Stomach (tissue), 19 donors: ENCODE measurements at regions of chr17 and their contacts with region 1.

Region 1: GRCh38 chr17:13002766-13003451 is 14.9 kb downstream of the ELAC2 start:
- DNase-seq: peak; percentile 84 to 90
- H3K4me3 ChIP-seq: no peak overlapping the region
- H3K27ac ChIP-seq: no peak overlapping the region
- H3K4me1 ChIP-seq: peaks cover 0 to 17% (median 4%) of the 10 kb centered on the region in 4 donors
- H3K27me3 ChIP-seq: no peaks in the 10 kb centered on the region
- CTCF ChIP-seq: peak in 5 of 7 experiments; percentile 61 to 87 (median 75)
- EP300 ChIP-seq: no peak
- POLR2A ChIP-seq: no peak

Region 2: DNA sequence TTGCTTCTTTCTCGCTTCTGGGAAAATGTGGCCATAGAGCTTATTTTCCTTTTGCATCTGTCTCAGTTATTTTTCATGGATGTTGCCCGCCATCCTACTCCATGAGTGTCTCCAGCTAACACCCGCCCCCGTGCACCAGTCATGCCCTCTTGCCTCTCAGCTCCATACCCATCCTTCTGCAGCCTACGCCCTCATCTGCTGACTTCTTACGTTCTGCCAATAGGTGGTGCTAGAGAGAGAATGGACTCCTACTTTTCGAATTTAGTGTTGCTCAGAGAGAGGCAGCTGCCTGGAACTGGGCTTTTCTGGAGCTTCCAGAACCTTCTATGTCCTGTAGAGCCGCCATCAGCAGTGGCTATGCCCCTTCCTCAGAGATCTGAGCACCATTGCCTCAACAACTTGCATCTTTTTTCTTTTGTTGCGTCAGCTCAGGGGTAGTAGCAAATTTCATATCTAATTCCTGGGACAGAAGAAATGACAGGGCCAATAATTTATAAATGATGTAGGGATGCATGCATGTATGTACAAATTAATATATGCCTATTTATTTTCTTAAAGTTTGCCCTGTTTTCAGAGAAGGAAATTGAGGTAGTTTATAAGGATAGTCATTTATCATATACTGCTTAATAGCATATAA is 456.9 kb before region 1 on chr17:
- intact Hi-C with region 1: loop called (anchors 10 kb)
- DNase-seq: peak in 1 of 2 donors; percentile 76
- H3K4me3 ChIP-seq: no peak overlapping the region
- H3K27ac ChIP-seq: no peak overlapping the region
- H3K4me1 ChIP-seq: peaks cover 0 to 7% (median 3%) of the 10 kb centered on the region in 4 donors
- H3K27me3 ChIP-seq: no peaks in the 10 kb centered on the region
- CTCF ChIP-seq: peak in 5 of 7 experiments; percentile 51 to 60 (median 52)
- EP300 ChIP-seq: no peak
- POLR2A ChIP-seq: no peak